Dendritic cell treated with granulocyte-macrophage colony-stimulating factor and Interleukin-4, amounts not matched to agents 40 ng/mL and 50 ng/mL, for 4 days (primary cell): ENCODE measurements at regions of chr1 and their contacts with region 1.

Region 1: GRCh38 chr1:244047621-244048471 is 3.2 kb upstream of the ZBTB18 start:
- H3K4me3 Mint-ChIP-seq: peak overlapping the region; percentile 98
- H3K27ac Mint-ChIP-seq: peak overlapping the region; percentile 99
- H3K4me1 Mint-ChIP-seq: peaks cover 17% of the 10 kb centered on the region
- H3K27me3 Mint-ChIP-seq: peaks cover 1% of the 10 kb centered on the region

Region 2: DNA sequence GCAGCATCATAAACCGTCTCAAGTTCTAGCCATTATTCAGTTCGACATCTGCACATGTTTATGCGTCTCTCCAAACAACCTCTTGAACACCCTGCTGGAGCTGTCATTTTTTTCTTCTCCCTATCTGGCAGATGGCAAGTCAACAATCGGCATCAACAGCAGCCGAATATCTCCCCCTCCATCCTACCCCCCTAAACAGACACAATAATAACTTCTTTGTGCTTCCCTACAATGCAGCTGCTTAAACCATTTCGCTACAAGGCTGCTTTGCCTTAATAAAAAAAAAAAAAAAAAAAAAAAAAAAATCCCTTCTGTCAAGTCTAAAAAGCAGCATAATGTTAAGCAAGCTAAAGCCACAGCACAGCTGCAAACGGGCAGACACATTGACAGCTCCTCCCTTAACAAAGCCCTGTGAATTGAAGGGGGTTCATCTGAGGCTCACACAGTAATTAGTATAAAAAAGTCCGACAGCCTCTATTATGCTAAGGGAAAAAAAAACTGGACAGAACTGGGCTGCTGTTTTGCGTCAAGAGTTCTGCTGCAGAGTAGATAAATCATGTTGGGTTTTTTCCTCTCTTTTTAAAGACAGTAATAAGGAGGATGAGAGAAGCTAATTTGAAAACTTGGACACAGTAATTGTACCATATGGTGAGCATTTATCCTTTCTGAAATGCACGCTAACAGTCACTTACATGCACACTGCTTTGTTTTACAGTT is 334.2 kb before region 1 on chr1:
- intact Hi-C with region 1: loop called (anchors 5 kb)
- H3K4me3 Mint-ChIP-seq: peak overlapping the region; percentile 25
- H3K27ac Mint-ChIP-seq: peak overlapping the region; percentile 41
- H3K4me1 Mint-ChIP-seq: peaks cover 16% of the 10 kb centered on the region
- H3K27me3 Mint-ChIP-seq: no peaks in the 10 kb centered on the region

Region 3: GRCh38 chr1:243850452-243851256 is 197.2 kb before region 1 on chr1:
- intact Hi-C with region 1: loop called (anchors 5 kb)
- H3K4me3 Mint-ChIP-seq: peak overlapping the region; percentile 77
- H3K27ac Mint-ChIP-seq: peak overlapping the region; percentile 76
- H3K4me1 Mint-ChIP-seq: peaks cover 15% of the 10 kb centered on the region
- H3K27me3 Mint-ChIP-seq: peaks cover 27% of the 10 kb centered on the region

Region 4: GRCh38 chr1:244256086-244256676 is 208.3 kb after region 1 on chr1:
- intact Hi-C with region 1: loop called (anchors 5 kb)
- H3K4me3 Mint-ChIP-seq: no peak overlapping the region
- H3K27ac Mint-ChIP-seq: peak overlapping the region; percentile 90
- H3K4me1 Mint-ChIP-seq: peaks cover 55% of the 10 kb centered on the region
- H3K27me3 Mint-ChIP-seq: no peaks in the 10 kb centered on the region

Region 5: DNA sequence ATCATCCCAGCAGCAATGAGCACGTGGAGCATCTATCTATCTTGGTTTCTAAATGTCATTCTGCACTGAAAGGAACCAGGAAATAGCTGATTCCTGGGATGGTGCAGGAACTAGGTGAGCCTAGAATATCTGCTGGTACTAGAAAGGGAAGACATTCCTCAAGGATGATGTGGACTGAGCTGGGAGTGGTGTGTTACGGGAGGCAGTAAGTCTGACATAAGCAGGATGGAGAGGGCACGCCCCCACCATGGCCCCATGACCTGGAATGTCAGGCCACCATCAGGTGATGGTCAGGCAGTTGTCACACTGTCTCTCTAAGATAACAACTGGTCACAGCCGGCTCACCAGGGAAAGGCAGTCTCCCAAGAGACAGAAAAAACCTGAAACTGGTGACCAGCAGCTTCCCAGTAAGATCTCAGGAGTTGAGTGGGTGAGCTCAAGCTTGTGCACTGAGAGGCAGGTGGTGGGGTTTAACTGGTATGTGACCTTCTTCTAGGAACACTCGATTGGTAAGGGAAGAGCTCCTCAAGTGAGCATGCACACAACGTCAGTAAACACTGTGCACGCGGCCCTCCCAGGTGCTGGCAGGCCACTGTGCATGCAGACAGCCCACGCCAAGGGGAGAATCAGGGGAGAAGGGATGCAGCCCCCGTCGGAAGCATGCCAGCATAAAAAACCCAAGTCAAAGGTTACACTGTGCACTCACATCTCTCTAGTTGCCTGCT is 255.2 kb after region 1 on chr1:
- intact Hi-C with region 1: loop called (anchors 2 kb)
- H3K4me3 Mint-ChIP-seq: no peak overlapping the region
- H3K27ac Mint-ChIP-seq: peak overlapping the region; percentile 87
- H3K4me1 Mint-ChIP-seq: peaks cover 58% of the 10 kb centered on the region
- H3K27me3 Mint-ChIP-seq: no peaks in the 10 kb centered on the region